Left lung (tissue), 14 donors: ENCODE measurements at regions of chr18 and their contacts with region 1.

Region 1: DNA sequence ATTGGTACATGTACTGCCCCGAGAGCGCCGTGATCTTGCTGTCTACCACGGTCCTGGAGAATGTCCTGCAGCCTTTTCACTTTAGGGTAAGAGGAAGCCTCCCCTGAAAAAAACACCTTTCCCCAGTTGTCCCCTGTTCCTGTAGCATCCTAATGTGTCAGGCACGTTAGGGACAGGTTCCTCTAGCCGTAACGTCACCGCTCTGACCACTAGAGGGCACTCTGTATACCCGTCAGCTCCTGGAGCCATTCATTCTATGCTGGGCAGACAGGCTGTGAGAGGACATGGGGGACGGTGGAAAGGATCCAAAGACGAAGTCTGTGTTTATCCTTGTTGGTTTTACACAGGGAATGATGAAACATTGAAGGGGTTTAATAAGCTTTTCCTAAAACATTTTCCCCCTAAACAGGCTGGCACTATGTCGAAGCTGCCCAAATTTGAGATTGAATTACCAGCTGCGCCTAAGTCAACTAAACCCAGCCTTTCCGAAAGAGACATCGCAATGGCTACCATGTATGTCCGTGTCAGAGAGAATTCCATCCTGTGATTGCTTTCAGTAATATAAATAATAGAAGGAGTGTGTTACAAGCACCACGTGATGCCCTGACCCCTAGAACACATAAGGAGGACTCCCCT is 12.7 kb downstream of the RMC1 start:
- DNase-seq: peak in 3 of 4 donors; percentile 74 to 88 (median 79)
- ATAC-seq: peak; percentile 99
- H3K4me3 ChIP-seq: no peak overlapping the region
- H3K27ac ChIP-seq: no peak overlapping the region
- H3K4me1 ChIP-seq: peaks cover 0 to 20% of the 10 kb centered on the region in 2 donors
- H3K27me3 ChIP-seq: no peaks in the 10 kb centered on the region
- CTCF ChIP-seq: peak; percentile 71 to 85

Region 2: GRCh38 chr18:23452728-23453679 is 63.0 kb before region 1 on chr18 and contains the start of gene RIOK3:
- intact Hi-C with region 1: no loop called
- DNase-seq: peak; percentile 95 to 100 (median 98)
- ATAC-seq: peak; percentile 97
- H3K4me3 ChIP-seq: peak within 1 kb of the TSS; percentile 84 to 91
- H3K27ac ChIP-seq: peak within 1 kb of the TSS; percentile 92 to 96
- H3K4me1 ChIP-seq: peaks cover 16 to 52% of the 10 kb centered on the region in 2 donors
- H3K27me3 ChIP-seq: no peaks in the 10 kb centered on the region
- CTCF ChIP-seq: peak in 1 of 2 donors; percentile 2
- polyA plus RNA-seq, gene RIOK3: 62.4 to 79.7 (median 70.9) TPM

Region 3: GRCh38 chr18:23580677-23581367 is 64.8 kb after region 1 on chr18:
- intact Hi-C with region 1: loop called in 1 of 2 experiments (anchors 5 kb)
- DNase-seq: no peak
- ATAC-seq: no peak
- H3K4me3 ChIP-seq: no peak overlapping the region
- H3K27ac ChIP-seq: peak overlapping the region in 1 of 2 donors; percentile 22
- H3K4me1 ChIP-seq: peaks cover 16 to 80% of the 10 kb centered on the region in 2 donors
- H3K27me3 ChIP-seq: no peaks in the 10 kb centered on the region
- CTCF ChIP-seq: no peak